CD14-positive monocyte (primary cell): ENCODE measurements at regions of chr3 and their contacts with region 1.

Region 1: GRCh38 chr3:183635431-183636220 is at the start of gene KLHL24:
- DNase-seq: peak; percentile 81 to 88 (median 85)
- H3K4me3 ChIP-seq: peak within 1 kb of the TSS; percentile 93 to 98 (median 94)
- H3K4me3 Mint-ChIP-seq: peak within 1 kb of the TSS; percentile 89 to 93
- H3K27ac ChIP-seq: peak within 1 kb of the TSS; percentile 89 to 90
- H3K27ac Mint-ChIP-seq: peak within 1 kb of the TSS; percentile 90 to 97 (median 94)
- H3K4me1 ChIP-seq: peaks cover 17 to 24% of the 10 kb centered on the region in 2 donors
- H3K4me1 Mint-ChIP-seq: peaks cover 22% of the 10 kb centered on the region
- H3K27me3 ChIP-seq: no peaks in the 10 kb centered on the region
- H3K27me3 Mint-ChIP-seq: peaks cover 0 to 2% (median 0%) of the 10 kb centered on the region in 3 donors
- CTCF ChIP-seq: no peak
- polyA plus RNA-seq, gene KLHL24: 24.1 to 31.7 (median 31.4) TPM

Region 2: DNA sequence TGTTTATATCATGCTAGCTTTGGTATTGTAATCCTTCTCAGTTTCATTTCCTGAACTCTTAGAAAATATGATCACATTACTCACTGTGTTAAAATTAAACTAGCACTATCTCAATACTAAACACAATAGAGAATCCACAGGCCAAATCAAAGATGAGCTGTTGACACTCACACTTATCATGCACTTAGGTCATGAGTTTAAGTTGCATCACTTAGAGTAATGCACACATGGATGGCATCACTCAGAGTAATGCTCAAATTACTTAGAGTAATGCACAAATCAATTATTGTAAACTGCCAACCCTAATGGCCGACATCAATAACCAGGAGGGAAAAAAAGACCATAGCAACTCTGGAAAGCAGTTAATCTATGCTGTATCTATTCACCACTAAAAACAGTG is 167.2 kb before region 1 on chr3:
- intact Hi-C with region 1: no loop called
- DNase-seq: no peak
- H3K4me3 ChIP-seq: no peak overlapping the region
- H3K4me3 Mint-ChIP-seq: no peak overlapping the region
- H3K27ac ChIP-seq: no peak overlapping the region
- H3K27ac Mint-ChIP-seq: no peak overlapping the region
- H3K4me1 ChIP-seq: peaks cover 4 to 11% of the 10 kb centered on the region in 2 donors
- H3K4me1 Mint-ChIP-seq: peaks cover 3% of the 10 kb centered on the region
- H3K27me3 ChIP-seq: no peaks in the 10 kb centered on the region
- H3K27me3 Mint-ChIP-seq: peaks cover 0 to 2% (median 1%) of the 10 kb centered on the region in 3 donors
- CTCF ChIP-seq: no peak

Region 3: GRCh38 chr3:183664913-183665381 is 29.3 kb after region 1 on chr3:
- intact Hi-C with region 1: no loop called
- DNase-seq: no peak
- H3K4me3 ChIP-seq: no peak overlapping the region
- H3K4me3 Mint-ChIP-seq: no peak overlapping the region
- H3K27ac ChIP-seq: no peak overlapping the region
- H3K27ac Mint-ChIP-seq: no peak overlapping the region
- H3K4me1 ChIP-seq: no peaks in the 10 kb centered on the region
- H3K4me1 Mint-ChIP-seq: no peaks in the 10 kb centered on the region
- H3K27me3 ChIP-seq: no peaks in the 10 kb centered on the region
- H3K27me3 Mint-ChIP-seq: no peaks in the 10 kb centered on the region
- CTCF ChIP-seq: no peak

Region 4: GRCh38 chr3:183697610-183698317 is 62.1 kb after region 1 on chr3 and contains the start of gene YEATS2:
- intact Hi-C with region 1: loop called (anchors 5 kb)
- DNase-seq: peak; percentile 43 to 62 (median 46)
- H3K4me3 ChIP-seq: peak within 1 kb of the TSS; percentile 82 to 93 (median 88)
- H3K4me3 Mint-ChIP-seq: peak within 1 kb of the TSS; percentile 89 to 92
- H3K27ac ChIP-seq: peak within 1 kb of the TSS; percentile 80 to 88
- H3K27ac Mint-ChIP-seq: peak within 1 kb of the TSS; percentile 79 to 91 (median 88)
- H3K4me1 ChIP-seq: peaks cover 26 to 30% of the 10 kb centered on the region in 2 donors
- H3K4me1 Mint-ChIP-seq: peaks cover 36% of the 10 kb centered on the region
- H3K27me3 ChIP-seq: no peaks in the 10 kb centered on the region
- H3K27me3 Mint-ChIP-seq: peaks cover 0 to 1% (median 0%) of the 10 kb centered on the region in 3 donors
- CTCF ChIP-seq: no peak
- polyA plus RNA-seq, gene YEATS2: 4.2 to 33.0 (median 5.0) TPM

Region 5: DNA sequence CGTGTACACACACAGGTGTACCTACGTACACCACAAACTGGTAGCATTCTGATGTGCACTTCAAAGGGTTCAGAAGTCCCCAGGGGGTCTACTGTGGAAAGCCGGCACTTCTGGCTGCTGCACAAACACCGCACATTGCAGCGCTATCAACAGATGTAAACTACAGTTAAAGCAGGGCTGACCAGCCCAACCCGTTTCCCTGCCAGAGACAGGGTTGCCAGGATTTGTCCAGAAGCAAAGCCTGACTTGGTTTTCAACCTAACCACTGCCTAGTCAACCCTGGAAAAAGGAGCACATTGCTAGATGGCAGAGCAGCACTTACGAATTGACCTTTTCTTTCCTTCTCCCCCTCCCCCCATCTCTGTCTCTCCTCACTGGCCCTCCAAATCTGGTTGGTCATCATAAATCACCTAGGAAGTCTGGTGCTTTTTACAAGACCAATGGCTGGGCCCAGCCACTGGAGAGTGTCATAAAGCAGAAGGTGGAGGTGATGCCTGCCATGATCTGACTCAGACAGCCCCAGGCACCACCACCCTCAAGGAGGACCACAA is 330.7 kb after region 1 on chr3:
- intact Hi-C with region 1: no loop called
- DNase-seq: no peak
- H3K4me3 ChIP-seq: no peak overlapping the region
- H3K4me3 Mint-ChIP-seq: no peak overlapping the region
- H3K27ac ChIP-seq: no peak overlapping the region
- H3K27ac Mint-ChIP-seq: peak overlapping the region in 2 of 7 donors; percentile 26 to 41
- H3K4me1 ChIP-seq: no peaks in the 10 kb centered on the region
- H3K4me1 Mint-ChIP-seq: no peaks in the 10 kb centered on the region
- H3K27me3 ChIP-seq: no peaks in the 10 kb centered on the region
- H3K27me3 Mint-ChIP-seq: peaks cover 0 to 4% (median 0%) of the 10 kb centered on the region in 3 donors
- CTCF ChIP-seq: no peak